AG04449 (cell line): ENCODE measurements at regions of chr14 and their contacts with region 1.

Region 1: GRCh38 chr14:64891839-64892375 is 12.2 kb upstream of the SPTB start:
- DNase-seq: peak; percentile 38
- H3K4me3 ChIP-seq: no peak overlapping the region
- CTCF ChIP-seq: peak; percentile 38

Region 2: GRCh38 chr14:64636208-64636979 is 255.5 kb before region 1 on chr14:
- CTCF ChIA-PET with region 1: interaction called, 19 read pairs
- POLR2A ChIA-PET with region 1: no interaction called
- DNase-seq: no peak
- H3K4me3 ChIP-seq: no peak overlapping the region
- CTCF ChIP-seq: peak; percentile 82

Region 3: GRCh38 chr14:64671591-64671990 is 220.3 kb before region 1 on chr14:
- CTCF ChIA-PET with region 1: interaction called, 91 read pairs
- POLR2A ChIA-PET with region 1: no interaction called
- DNase-seq: no peak
- H3K4me3 ChIP-seq: no peak overlapping the region
- CTCF ChIP-seq: peak; percentile 61

Region 4: GRCh38 chr14:64788668-64789067 is 103.2 kb before region 1 on chr14:
- CTCF ChIA-PET with region 1: interaction called, 21 read pairs
- POLR2A ChIA-PET with region 1: no interaction called
- DNase-seq: peak; percentile 88
- H3K4me3 ChIP-seq: no peak overlapping the region
- CTCF ChIP-seq: no peak

Region 5: DNA sequence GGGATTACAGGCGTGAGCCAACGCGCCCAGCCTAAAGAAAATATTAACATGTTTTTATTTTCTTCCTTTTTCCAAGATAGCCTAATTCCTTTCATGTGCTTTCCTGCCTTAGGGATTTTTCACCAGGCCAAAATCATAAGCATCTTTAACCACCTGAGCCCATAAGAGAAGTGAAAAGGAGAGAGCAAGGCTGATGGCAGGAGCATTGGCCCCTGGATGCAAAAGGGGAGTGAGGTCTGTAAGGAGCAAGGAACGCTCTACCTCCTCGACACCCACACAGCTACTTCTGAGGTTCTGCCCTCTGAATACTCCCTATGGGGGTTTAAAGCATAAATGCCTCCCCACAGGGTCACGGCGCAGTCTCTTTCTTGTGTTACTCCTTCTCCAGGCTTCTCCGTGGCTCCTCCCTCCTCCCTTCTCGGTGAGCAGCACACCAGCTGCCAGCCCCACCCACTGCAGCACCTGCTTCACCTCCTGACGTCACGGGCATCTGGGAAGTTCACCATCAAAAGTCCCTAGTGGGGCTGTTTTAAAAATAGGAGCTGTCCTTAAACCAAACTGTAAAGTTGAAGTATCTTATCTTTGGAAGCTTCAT is 79.6 kb before region 1 on chr14:
- CTCF ChIA-PET with region 1: interaction called, 419 read pairs
- POLR2A ChIA-PET with region 1: interaction called, 4 read pairs
- DNase-seq: no peak
- H3K4me3 ChIP-seq: no peak overlapping the region
- CTCF ChIP-seq: no peak

Region 6: GRCh38 chr14:64865109-64865508 is 26.8 kb before region 1 on chr14:
- CTCF ChIA-PET with region 1: interaction called, 16 read pairs
- POLR2A ChIA-PET with region 1: no interaction called
- DNase-seq: no peak
- H3K4me3 ChIP-seq: no peak overlapping the region
- CTCF ChIP-seq: no peak

Region 7: DNA sequence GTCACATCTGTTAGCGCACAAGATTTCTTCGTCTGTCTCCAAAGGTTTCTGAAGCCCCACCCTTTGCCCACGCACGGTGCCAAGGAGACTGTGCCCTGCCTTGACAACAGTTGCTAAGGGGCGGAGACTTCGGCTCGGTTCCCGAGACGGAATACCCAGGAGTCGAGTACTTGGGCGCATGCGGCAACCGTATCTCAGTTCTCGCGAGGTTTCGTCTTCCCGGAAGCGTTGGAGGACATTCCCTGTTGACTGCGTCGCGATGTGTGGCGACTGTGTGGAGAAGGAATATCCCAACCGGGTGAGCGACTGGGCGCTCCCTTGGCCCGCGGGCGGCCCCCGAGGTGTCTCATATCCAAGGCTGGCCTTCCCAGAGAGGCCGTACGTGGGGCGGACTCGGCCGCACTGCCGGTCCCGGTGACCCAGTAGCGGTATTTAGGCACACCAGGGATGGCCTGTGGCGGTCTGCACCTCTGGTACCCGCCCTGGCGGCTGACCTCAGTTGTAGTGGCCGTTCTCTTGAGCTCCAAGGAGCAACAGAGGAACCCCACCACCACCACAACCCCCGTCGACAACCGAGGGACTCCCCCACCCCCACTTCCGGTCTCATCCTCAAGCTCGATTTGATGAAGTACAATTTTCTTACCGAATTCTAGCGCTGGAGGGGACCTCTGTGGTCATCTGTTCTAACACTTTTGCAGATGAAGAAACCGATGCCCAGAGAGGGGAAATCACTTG is 22.5 kb after region 1 on chr14 and contains the start of gene CHURC1:
- CTCF ChIA-PET with region 1: interaction called, 26 read pairs
- POLR2A ChIA-PET with region 1: no interaction called
- DNase-seq: peak; percentile 84
- H3K4me3 ChIP-seq: peak within 1 kb of the TSS; percentile 98
- CTCF ChIP-seq: no peak